ENCODE measurements at regions of chr11 and their contacts with region 1.

Region 1: GRCh38 chr11:47176328-47177228 is at the start of gene ARFGAP2:
- DNase-seq: peak; percentile 97
- ATAC-seq: peak; percentile 95
- H3K4me3 Mint-ChIP-seq: peak within 1 kb of the TSS; percentile 94
- H3K27ac Mint-ChIP-seq: peak within 1 kb of the TSS; percentile 100
- H3K4me1 Mint-ChIP-seq: peaks cover 52% of the 10 kb centered on the region
- H3K27me3 Mint-ChIP-seq: no peaks in the 10 kb centered on the region
- total RNA-seq, gene ARFGAP2: 103 TPM

Region 2: GRCh38 chr11:47233989-47234668 is 57.6 kb after region 1 on chr11:
- CTCF ChIA-PET with region 1: interaction called, 14 read pairs
- DNase-seq: no peak
- ATAC-seq: peak; percentile 28
- H3K4me3 Mint-ChIP-seq: no peak overlapping the region
- H3K27ac Mint-ChIP-seq: peak overlapping the region; percentile 26
- H3K4me1 Mint-ChIP-seq: peaks cover 30% of the 10 kb centered on the region
- H3K27me3 Mint-ChIP-seq: no peaks in the 10 kb centered on the region

Region 3: GRCh38 chr11:47317064-47317828 is 140.7 kb after region 1 on chr11:
- CTCF ChIA-PET with region 1: no interaction called
- DNase-seq: no peak
- ATAC-seq: no peak
- H3K4me3 Mint-ChIP-seq: no peak overlapping the region
- H3K27ac Mint-ChIP-seq: peak overlapping the region; percentile 3
- H3K4me1 Mint-ChIP-seq: peaks cover 4% of the 10 kb centered on the region
- H3K27me3 Mint-ChIP-seq: no peaks in the 10 kb centered on the region